ENCODE measurements at regions of chr10 and their contacts with region 1.

Region 1: GRCh38 chr10:21424459-21424861 is 101.0 kb downstream of the SKIDA1 start:
- DNase-seq: no peak
- H3K4me3 ChIP-seq: no peak overlapping the region
- H3K27ac ChIP-seq: no peak overlapping the region
- H3K4me1 ChIP-seq: peaks cover 10% of the 10 kb centered on the region
- H3K27me3 ChIP-seq: no peaks in the 10 kb centered on the region
- CTCF ChIP-seq: no peak

Region 2: GRCh38 chr10:21055339-21056135 is 368.9 kb before region 1 on chr10:
- CTCF ChIA-PET with region 1: no interaction called
- dilution Hi-C with region 1: no loop called
- in situ Hi-C with region 1: no loop called
- intact Hi-C with region 1: no loop called
- DNase-seq: no peak
- H3K4me3 ChIP-seq: no peak overlapping the region
- H3K27ac ChIP-seq: no peak overlapping the region
- H3K4me1 ChIP-seq: no peaks in the 10 kb centered on the region
- H3K27me3 ChIP-seq: no peaks in the 10 kb centered on the region
- CTCF ChIP-seq: no peak

Region 3: DNA sequence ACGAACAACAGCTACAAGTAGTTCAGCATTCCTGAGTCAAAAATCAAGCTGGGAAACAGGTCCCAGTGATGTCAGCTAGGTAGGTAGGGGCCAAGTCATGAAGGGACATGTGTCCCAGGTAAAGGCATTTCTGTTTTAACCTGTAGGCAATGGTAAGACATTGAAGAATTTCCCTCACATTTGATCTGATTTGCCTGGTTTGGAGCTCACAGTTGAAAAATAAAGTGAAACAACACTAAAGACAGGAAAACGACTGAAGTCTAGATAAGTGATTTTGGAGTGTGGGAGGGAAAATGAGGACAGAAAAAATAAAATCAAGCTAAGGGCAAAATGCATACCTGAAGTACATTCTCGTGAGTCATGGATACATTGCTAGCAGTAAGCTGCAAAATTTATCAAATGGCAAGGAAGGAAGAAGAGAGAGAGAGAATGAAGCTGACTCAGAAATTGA is 68.9 kb before region 1 on chr10:
- CTCF ChIA-PET with region 1: interaction called, 12 read pairs
- dilution Hi-C with region 1: no loop called
- in situ Hi-C with region 1: no loop called
- intact Hi-C with region 1: no loop called
- DNase-seq: peak; percentile 65
- H3K4me3 ChIP-seq: peak overlapping the region in 1 of 3 experiments; percentile 6
- H3K27ac ChIP-seq: peak overlapping the region; percentile 58
- H3K4me1 ChIP-seq: peaks cover 6% of the 10 kb centered on the region
- H3K27me3 ChIP-seq: no peaks in the 10 kb centered on the region
- CTCF ChIP-seq: no peak

Region 4: GRCh38 chr10:21449288-21449966 is 25.0 kb after region 1 on chr10:
- CTCF ChIA-PET with region 1: no interaction called
- dilution Hi-C with region 1: no loop called
- in situ Hi-C with region 1: no loop called
- intact Hi-C with region 1: loop called (anchors 1 kb)
- DNase-seq: no peak
- H3K4me3 ChIP-seq: no peak overlapping the region
- H3K27ac ChIP-seq: no peak overlapping the region
- H3K4me1 ChIP-seq: no peaks in the 10 kb centered on the region
- H3K27me3 ChIP-seq: no peaks in the 10 kb centered on the region
- CTCF ChIP-seq: no peak